Right ventricle myocardium superior (tissue), 1 donor: ENCODE measurements at regions of chr15 and their contacts with region 1.

Region 1: DNA sequence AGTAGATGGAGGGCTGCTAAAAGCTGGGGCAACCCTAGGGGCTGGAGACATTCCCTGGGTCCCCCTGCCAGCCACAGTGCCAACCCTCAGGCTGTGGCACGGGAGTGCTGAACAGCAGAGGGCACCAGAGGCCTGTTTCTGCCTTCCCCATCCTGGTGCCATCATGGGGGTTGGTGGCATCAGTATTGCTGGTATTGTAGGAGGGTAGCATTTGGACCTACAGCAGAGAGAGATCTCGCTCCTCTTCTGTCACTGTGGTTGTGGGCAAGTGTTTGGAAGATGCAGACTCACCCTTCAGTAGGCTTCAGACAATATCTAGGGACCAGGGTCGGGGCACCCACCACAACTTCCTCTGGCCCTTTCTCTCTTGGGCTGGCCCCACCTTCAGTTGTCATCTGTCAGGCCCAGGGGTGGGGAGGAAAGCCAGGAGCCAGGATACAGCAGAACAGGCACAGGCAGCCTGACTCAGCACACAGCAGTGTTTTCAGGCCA is 123.5 kb downstream of the RPLP1 start:
- DNase-seq: peak; percentile 70
- ATAC-seq: peak; percentile 93

Region 2: GRCh38 chr15:69652751-69653305 is 76.7 kb after region 1 on chr15:
- intact Hi-C with region 1: loop called (anchors 5 kb)
- DNase-seq: no peak
- ATAC-seq: no peak

Region 3: DNA sequence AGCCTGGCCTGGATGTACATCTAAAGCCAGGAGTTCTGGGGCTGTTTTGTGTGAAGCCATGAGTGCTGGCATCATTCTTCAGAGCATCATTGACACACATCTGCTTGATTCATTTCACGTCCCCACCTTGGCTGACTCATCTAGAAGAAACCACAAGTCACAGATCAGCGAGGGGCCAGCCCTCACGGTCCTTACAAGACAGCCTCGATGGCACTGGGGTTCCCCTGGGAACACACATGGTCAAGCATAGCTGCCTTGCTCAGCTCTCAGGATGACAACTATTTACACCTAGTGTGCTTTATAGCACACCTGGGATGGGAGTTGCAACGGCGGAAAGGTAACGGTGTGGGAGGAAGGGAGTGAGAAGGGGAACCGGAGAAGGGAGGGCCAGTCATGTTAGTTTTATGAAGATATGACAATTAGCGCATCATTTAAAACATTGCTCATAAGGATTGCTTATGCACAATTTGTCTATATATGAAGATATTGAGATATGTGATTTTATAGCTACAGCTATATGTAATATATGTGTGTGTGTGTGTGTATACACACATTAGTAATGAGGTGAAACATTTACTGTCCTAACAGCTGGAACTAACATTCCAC is 103.6 kb after region 1 on chr15:
- intact Hi-C with region 1: no loop called
- DNase-seq: no peak
- ATAC-seq: no peak

Region 4: DNA sequence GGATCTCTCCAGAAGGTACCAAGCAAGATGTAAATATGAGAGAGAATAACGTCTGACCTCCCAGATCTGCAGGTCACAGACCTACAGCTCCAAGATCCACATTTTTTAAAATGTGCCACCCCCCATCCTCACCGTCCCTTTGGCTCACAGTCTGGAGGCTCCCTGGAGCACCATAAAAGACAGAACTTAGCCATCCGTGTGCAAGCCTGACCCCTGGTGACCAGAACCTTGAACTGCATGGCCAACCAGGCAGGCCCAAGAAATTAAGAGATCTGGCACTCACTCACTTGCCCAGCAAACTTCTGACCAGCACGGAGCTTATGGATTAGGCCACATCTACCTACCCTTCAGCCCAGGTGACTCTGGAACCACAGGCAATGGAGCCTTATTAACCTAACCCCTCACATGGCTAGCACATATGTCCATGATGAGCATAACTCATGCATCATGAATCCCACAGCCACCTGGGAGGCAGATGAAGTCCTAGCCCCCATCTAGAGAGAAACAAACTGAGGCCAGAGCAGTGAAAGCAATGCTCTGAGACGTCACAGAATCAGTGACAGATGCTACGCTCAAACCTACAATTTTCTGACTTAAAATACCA is 912.0 kb after region 1 on chr15:
- intact Hi-C with region 1: loop called (anchors 10 kb)
- DNase-seq: peak; percentile 83
- ATAC-seq: peak; percentile 63